ENCODE measurements at regions of chr22 and their contacts with region 1.

Region 1: GRCh38 chr22:33018232-33018864 is 39.8 kb downstream of the SYN3 start:
- DNase-seq: peak; percentile 45 to 83 (median 73)
- ATAC-seq: peak; percentile 80 to 84
- H3K4me3 ChIP-seq: no peak overlapping the region
- H3K27ac ChIP-seq: no peak overlapping the region
- H3K4me1 ChIP-seq: no peaks in the 10 kb centered on the region
- H3K27me3 ChIP-seq: no peaks in the 10 kb centered on the region

Region 2: GRCh38 chr22:32202539-32203180 is 815.7 kb before region 1 on chr22:
- intact Hi-C with region 1: no loop called
- DNase-seq: peak in 1 of 3 donors; percentile 67
- ATAC-seq: peak; percentile 30 to 45
- H3K4me3 ChIP-seq: no peak overlapping the region
- H3K27ac ChIP-seq: no peak overlapping the region
- H3K4me1 ChIP-seq: no peaks in the 10 kb centered on the region
- H3K27me3 ChIP-seq: no peaks in the 10 kb centered on the region

Region 3: DNA sequence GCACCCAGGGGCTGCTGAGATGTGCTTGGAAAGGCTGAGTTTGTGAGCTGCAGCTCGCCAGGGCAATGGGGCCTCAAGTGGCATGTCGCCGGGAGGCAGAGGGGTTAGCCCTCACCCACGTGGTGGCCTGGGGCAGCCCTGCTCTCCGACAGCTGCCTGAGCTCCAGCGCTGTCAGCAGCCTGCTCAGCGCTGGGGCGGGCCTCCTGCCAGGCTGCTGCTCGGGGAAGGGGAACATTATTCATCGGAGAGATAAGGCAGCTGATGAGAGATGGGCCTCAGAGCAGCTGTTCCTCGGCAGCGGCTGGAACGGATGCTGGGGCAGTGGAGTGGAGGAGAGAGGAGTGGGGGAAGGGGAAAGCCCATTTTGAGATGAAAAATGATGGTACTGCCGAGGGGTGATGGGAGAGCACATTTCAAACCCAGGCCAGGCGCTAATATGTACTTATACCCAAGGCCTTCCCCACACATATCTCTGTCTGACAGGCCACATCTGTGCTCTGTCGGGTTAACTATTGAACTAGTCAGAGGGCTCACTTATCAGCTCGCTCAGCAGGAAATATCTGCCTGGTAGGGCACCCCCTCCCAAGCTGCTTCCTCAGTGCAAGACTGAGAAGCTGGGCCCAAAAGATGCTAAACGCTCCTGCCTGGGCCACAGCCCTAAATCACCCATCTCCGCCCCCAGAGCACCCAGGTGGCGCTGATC is 137.3 kb before region 1 on chr22:
- intact Hi-C with region 1: no loop called
- DNase-seq: peak; percentile 91 to 97 (median 96)
- ATAC-seq: peak; percentile 96 to 97
- H3K4me3 ChIP-seq: no peak overlapping the region
- H3K27ac ChIP-seq: peak overlapping the region; percentile 89
- H3K4me1 ChIP-seq: peaks cover 7% of the 10 kb centered on the region
- H3K27me3 ChIP-seq: no peaks in the 10 kb centered on the region

Region 4: GRCh38 chr22:33049119-33049729 is 30.9 kb after region 1 on chr22:
- intact Hi-C with region 1: loop called in 1 of 4 experiments (anchors 2 kb)
- DNase-seq: peak; percentile 82 to 92 (median 87)
- ATAC-seq: peak; percentile 90
- H3K4me3 ChIP-seq: no peak overlapping the region
- H3K27ac ChIP-seq: no peak overlapping the region
- H3K4me1 ChIP-seq: no peaks in the 10 kb centered on the region
- H3K27me3 ChIP-seq: peaks cover 2% of the 10 kb centered on the region

Region 5: DNA sequence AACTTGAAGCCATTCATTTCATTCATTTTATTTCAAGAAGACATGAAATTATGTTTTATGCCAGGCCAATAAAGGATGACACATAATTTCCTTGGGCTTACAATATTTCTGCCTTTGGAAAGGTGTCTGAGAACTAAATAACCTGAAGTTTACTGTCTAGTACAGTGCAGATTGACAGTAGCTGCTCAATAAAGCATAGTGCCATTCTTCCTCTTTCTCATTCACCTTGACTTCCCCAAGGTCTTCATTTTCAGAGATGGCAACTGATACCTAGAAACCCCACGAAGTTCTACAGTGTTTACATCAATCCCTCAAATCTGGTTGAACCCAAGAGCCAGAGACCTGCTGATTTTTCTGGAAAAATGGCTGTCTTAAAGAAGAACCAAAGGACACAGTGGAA is 184.1 kb after region 1 on chr22:
- intact Hi-C with region 1: loop called in 2 of 4 experiments (anchors 5 to 10 kb)
- DNase-seq: no peak
- ATAC-seq: no peak
- H3K4me3 ChIP-seq: no peak overlapping the region
- H3K27ac ChIP-seq: no peak overlapping the region
- H3K4me1 ChIP-seq: no peaks in the 10 kb centered on the region
- H3K27me3 ChIP-seq: peaks cover 2% of the 10 kb centered on the region